Activated T-helper 1 cell treated with anti-CD3 and anti-CD28 coated beads, Interleukin-12 subunit alpha, Interleukin-12 subunit beta, Interleukin-2, Interleukin-4 antibody, amounts not matched to agents 30 ng/mL and 10 ng/mL and 1 ng/mL, durations not matched to agents 14 hours and 24 hours and 36 hours (primary cell): ENCODE measurements at regions of chr2 and their contacts with region 1.

Region 1: DNA sequence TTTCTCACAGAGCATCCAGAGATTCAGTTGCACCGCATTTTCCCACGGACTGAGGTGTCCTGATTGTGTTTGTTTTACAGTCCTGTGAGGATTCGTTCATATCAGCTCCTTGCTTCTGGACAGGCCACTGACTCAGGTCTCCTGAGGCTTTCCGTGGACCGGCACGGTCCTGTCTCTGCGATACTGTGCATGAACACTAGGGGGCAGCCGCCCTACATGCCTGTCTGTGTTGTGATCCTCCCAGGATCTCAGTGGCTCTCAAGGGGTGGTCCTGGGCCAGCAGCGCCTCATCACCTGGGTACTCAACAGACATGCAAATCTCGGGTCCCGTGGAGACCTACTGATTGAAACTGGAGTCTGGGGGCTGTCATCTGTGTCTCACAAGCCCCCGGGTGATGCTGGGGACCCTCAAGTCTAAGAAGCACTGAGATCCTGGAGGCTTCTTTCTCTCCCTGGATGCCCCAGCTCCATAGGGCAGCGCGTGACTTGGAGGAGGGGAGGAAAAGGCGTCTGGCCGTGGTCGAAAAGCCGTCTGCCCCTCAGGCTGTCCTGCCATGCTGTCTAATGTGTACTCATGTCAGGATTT is 28.9 kb downstream of the IL1R2 start:
- DNase-seq: peak; percentile 70
- H3K4me3 Mint-ChIP-seq: no peak overlapping the region
- H3K27ac Mint-ChIP-seq: no peak overlapping the region
- H3K4me1 Mint-ChIP-seq: peaks cover 18% of the 10 kb centered on the region
- H3K27me3 Mint-ChIP-seq: peaks cover 13% of the 10 kb centered on the region

Region 2: GRCh38 chr2:101396316-101396717 is 624.4 kb before region 1 on chr2:
- intact Hi-C with region 1: no loop called
- DNase-seq: no peak
- H3K4me3 Mint-ChIP-seq: no peak overlapping the region
- H3K27ac Mint-ChIP-seq: no peak overlapping the region
- H3K4me1 Mint-ChIP-seq: peaks cover 7% of the 10 kb centered on the region
- H3K27me3 Mint-ChIP-seq: peaks cover 15% of the 10 kb centered on the region

Region 3: GRCh38 chr2:102033031-102033749 is 12.5 kb after region 1 on chr2:
- intact Hi-C with region 1: no loop called
- DNase-seq: peak; percentile 4
- H3K4me3 Mint-ChIP-seq: peak overlapping the region; percentile 24
- H3K27ac Mint-ChIP-seq: peak overlapping the region; percentile 78
- H3K4me1 Mint-ChIP-seq: peaks cover 52% of the 10 kb centered on the region
- H3K27me3 Mint-ChIP-seq: peaks cover 7% of the 10 kb centered on the region

Region 4: DNA sequence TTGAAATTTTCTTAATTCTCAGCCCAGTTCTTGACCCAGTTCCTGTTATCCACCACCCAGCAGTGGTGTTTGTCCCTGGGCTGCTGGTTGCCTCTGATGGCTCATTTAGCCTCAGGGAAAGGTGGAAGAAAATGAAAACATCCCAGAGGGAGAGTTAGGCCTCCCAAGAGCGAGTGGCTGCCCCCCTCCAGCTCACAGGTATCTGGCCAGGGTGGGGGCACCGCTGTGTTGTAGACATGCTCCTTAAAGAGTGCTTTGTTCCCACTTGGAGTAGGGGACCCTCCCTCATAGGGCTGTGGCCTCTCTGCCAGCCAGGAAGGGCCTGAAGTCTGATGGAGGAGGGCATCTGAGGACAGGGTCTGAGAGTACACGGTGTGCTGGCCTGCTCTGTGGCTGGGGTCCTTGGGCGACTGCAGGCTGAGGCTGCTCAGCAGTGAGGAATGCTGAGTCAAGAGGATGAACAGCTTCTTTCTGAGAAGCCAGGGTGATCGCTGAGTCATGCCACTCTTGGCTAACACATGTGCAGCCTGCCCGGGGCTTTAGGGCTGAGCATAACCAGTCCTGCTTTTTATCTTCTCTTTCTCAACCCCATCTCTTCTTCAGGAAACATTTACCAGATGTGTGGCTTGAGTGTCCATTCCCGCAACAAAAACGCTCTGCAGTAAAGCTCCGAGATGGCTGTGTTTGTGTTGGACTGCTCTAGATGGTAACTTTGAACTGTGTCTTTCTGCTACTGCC is 43.4 kb after region 1 on chr2:
- intact Hi-C with region 1: loop called (anchors 1 kb)
- DNase-seq: peak; percentile 17
- H3K4me3 Mint-ChIP-seq: no peak overlapping the region
- H3K27ac Mint-ChIP-seq: no peak overlapping the region
- H3K4me1 Mint-ChIP-seq: peaks cover 31% of the 10 kb centered on the region
- H3K27me3 Mint-ChIP-seq: peaks cover 7% of the 10 kb centered on the region

Region 5: DNA sequence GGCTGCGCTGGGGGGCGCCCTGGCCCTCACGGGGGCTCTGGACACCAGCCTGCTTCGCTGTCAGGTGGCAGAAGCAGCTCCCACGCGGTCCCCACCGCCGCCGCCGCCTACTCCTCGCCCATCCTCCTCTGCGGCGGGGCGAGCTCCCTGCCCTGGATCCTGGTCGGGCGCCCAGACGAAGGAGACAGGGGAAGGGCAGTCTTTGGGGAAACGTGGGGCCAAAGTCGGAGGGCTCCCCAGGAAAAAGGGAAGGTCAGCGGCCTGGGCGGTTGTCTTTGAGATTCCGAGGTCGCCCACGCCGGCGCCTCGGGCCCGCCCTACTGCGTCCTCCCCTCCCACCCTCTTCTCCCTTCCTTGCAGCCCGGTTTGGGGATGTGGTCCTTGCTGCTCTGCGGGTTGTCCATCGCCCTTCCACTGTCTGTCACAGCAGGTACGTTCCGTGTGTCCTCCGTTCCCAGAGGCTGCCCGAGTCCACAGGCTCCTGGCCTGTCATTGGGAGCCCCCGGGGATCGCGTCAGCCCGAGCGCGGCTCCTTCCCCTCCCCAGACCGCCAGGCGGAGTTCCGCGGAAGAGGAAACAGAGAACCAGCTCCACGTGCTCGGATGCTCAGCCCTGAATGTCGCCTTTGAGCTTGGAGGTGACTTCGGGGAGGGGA is 166.9 kb after region 1 on chr2:
- intact Hi-C with region 1: loop called (anchors 1 kb)
- DNase-seq: no peak
- H3K4me3 Mint-ChIP-seq: peak overlapping the region; percentile 73
- H3K27ac Mint-ChIP-seq: peak overlapping the region; percentile 63
- H3K4me1 Mint-ChIP-seq: peaks cover 17% of the 10 kb centered on the region
- H3K27me3 Mint-ChIP-seq: peaks cover 23% of the 10 kb centered on the region

Region 6: DNA sequence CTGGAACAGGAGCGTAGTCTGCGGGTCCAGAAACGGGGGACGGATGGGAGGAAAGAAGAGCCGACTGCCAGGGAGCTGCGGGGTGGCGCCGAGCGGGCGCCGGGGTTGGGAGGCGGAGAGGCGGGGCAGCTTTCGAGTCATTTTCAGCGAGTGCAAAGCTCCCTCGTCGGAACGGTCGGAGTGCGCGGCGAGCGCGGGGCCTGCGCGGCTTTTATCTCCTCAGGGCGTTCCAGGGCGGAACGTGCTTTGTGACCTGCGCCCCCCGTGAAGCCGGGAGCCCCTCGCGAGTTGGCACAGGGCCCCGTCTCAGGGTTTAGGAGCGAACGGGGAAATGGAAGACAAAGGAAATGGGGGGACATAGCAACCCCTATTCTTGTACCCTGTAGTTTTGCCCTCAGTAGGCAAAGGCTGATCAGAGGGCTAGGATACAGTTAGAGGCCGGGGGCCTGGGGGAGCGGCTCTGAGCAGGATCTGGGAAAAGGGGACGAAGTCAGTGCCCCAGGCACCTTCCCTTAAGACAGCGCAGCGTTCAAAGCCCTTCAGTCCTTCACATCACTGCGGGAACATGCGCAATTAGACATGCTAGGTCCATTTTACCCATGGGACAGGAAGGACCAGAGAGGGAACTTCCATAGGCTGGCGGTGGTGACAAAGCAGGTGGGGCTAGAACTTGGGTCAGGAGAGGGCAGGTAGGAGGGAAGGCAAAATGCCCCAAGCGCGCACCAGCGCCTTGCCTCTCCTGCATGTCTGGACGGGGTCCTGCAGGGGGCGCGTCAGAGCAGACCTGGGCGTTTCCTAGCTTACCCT is 230.6 kb after region 1 on chr2:
- intact Hi-C with region 1: loop called (anchors 1 kb)
- DNase-seq: peak; percentile 49
- H3K4me3 Mint-ChIP-seq: peak overlapping the region; percentile 72
- H3K27ac Mint-ChIP-seq: peak overlapping the region; percentile 71
- H3K4me1 Mint-ChIP-seq: peaks cover 44% of the 10 kb centered on the region
- H3K27me3 Mint-ChIP-seq: peaks cover 4% of the 10 kb centered on the region

Region 7: DNA sequence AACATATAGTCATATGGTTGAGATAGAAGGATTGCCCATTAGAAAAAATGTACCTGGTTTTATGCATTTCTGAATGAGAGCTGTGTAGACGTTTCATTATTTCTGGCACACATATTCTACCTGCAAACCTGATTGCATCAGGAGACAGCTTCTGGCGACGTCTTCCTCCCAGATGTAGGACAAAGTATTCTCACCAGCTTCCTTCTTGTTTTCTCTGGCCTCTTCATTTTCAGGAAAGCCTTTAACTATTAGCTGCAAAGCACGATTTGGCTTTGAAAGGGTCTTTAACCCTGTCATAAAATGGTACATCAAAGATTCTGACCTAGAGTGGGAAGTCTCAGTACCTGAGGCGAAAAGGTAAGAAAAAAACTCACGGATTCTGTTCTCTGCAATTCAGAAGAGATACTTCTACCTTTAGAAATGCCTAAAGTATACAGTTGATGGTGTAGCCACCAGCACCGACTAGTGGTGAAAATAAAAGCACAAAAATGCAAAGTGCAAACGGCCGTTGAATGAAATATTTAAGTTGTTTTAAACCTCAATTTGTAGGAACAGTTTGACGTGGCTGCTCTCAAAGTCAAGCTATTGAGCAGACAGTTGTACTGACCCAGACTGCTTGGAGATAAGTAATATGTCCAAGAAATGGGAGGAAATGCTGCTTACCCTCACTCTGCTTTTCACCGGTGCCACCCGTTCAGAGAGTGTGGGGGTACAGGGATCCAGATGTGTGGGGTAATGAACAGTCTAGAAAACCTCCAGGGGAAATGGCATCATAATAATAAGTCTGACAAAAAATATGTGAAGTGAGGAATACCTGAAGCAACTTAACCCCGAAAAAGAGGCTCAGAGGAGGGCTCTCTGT is 422.5 kb after region 1 on chr2:
- intact Hi-C with region 1: loop called (anchors 1 kb)
- DNase-seq: peak; percentile 38
- H3K4me3 Mint-ChIP-seq: peak overlapping the region; percentile 56
- H3K27ac Mint-ChIP-seq: peak overlapping the region; percentile 72
- H3K4me1 Mint-ChIP-seq: peaks cover 19% of the 10 kb centered on the region
- H3K27me3 Mint-ChIP-seq: no peaks in the 10 kb centered on the region